Caco-2 (cell line): ENCODE measurements at regions of chr17 and their contacts with region 1.

Region 1: GRCh38 chr17:66900126-66901010 is 64.1 kb upstream of the CACNG4 start:
- DNase-seq: peak in 1 of 2 experiments; percentile 13
- H3K4me3 ChIP-seq: no peak overlapping the region
- H3K4me3 Mint-ChIP-seq: no peak overlapping the region
- H3K27ac Mint-ChIP-seq: no peak overlapping the region
- H3K4me1 ChIP-seq: no peaks in the 10 kb centered on the region
- H3K4me1 Mint-ChIP-seq: no peaks in the 10 kb centered on the region
- H3K27me3 ChIP-seq: no peaks in the 10 kb centered on the region
- H3K27me3 Mint-ChIP-seq: peaks cover 2% of the 10 kb centered on the region
- CTCF ChIP-seq: peak; percentile 31 to 49

Region 2: GRCh38 chr17:66753126-66753920 is 147.0 kb before region 1 on chr17:
- CTCF ChIA-PET with region 1: no interaction called
- POLR2A ChIA-PET with region 1: no interaction called
- intact Hi-C with region 1: no loop called
- DNase-seq: no peak
- H3K4me3 ChIP-seq: no peak overlapping the region
- H3K4me3 Mint-ChIP-seq: no peak overlapping the region
- H3K27ac Mint-ChIP-seq: no peak overlapping the region
- H3K4me1 ChIP-seq: no peaks in the 10 kb centered on the region
- H3K4me1 Mint-ChIP-seq: no peaks in the 10 kb centered on the region
- H3K27me3 ChIP-seq: no peaks in the 10 kb centered on the region
- H3K27me3 Mint-ChIP-seq: no peaks in the 10 kb centered on the region
- CTCF ChIP-seq: no peak

Region 3: GRCh38 chr17:66841328-66841727 is 59.0 kb before region 1 on chr17:
- CTCF ChIA-PET with region 1: interaction called, 4 read pairs
- POLR2A ChIA-PET with region 1: no interaction called
- intact Hi-C with region 1: loop called (anchors 1 kb)
- DNase-seq: peak; percentile 45 to 52
- H3K4me3 ChIP-seq: no peak overlapping the region
- H3K4me3 Mint-ChIP-seq: no peak overlapping the region
- H3K27ac Mint-ChIP-seq: no peak overlapping the region
- H3K4me1 ChIP-seq: no peaks in the 10 kb centered on the region
- H3K4me1 Mint-ChIP-seq: no peaks in the 10 kb centered on the region
- H3K27me3 ChIP-seq: no peaks in the 10 kb centered on the region
- H3K27me3 Mint-ChIP-seq: peaks cover 14% of the 10 kb centered on the region
- CTCF ChIP-seq: peak; percentile 47